ENCODE measurements at regions of chr17 and their contacts with region 1.

Region 1: DNA sequence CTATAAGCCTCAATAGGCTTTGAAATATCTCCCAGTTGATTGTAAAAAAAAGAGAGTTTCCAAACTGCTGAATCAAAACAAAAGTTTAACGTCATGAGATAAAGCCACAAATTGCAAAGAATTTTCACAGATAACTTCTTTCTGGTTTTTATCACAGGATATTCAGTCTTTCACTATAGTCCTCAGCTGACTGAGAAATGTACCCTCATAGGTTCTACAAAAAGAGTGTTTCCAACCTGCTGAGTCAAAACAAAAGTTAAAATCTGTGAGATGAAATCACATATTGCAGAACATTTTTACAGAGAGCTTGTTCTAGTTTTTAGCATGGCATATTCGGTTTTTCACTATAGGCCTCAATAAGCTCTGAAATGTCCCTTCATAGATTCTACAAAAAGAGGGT is 559.2 kb downstream of the KCNJ18 start:
- DNase-seq: no peak
- H3K4me3 ChIP-seq: no peak overlapping the region
- H3K27ac ChIP-seq: no peak overlapping the region
- H3K4me1 ChIP-seq: no peaks in the 10 kb centered on the region
- H3K27me3 ChIP-seq: no peaks in the 10 kb centered on the region
- CTCF ChIP-seq: no peak

Region 2: GRCh38 chr17:22202702-22203101 is 48.8 kb before region 1 on chr17:
- CTCF ChIA-PET with region 1: no interaction called
- dilution Hi-C with region 1: loop called (anchors 5 kb)
- in situ Hi-C with region 1: no loop called
- intact Hi-C with region 1: no loop called
- DNase-seq: no peak
- H3K4me3 ChIP-seq: no peak overlapping the region
- H3K27ac ChIP-seq: no peak overlapping the region
- H3K4me1 ChIP-seq: no peaks in the 10 kb centered on the region
- H3K27me3 ChIP-seq: no peaks in the 10 kb centered on the region
- CTCF ChIP-seq: no peak

Measured in mammary epithelial cell (primary cell).